ENCODE measurements at regions of chr16 and their contacts with region 1.

Region 1: DNA sequence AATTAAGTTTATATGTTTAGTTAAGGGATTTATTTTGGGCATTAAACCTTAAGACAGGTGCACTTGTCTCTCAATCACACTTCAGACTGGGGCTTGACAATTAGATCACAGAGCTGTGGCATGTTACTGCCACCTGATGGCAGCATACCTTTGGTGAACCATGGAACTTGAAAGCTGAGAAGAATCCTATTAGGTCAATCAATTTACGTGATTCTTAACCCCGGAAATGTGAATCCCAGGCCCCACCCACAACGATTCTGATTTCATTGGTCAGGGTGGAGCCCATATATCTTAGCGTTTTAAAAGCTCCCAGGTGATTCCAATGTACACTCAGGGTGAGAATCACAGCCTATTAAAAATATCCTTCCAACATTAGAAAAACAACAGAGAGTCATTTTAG is 91.0 kb downstream of the GSG1L start:
- DNase-seq: peak in 1 of 10 donors; percentile 32
- H3K4me3 ChIP-seq: no peak overlapping the region
- H3K27ac ChIP-seq: no peak overlapping the region
- H3K27me3 ChIP-seq: no peaks in the 10 kb centered on the region
- CTCF ChIP-seq: peak in 54 of 56 donors; percentile 17 to 64 (median 42)

Region 2: GRCh38 chr16:27892881-27893280 is 79.6 kb before region 1 on chr16:
- intact Hi-C with region 1: no loop called
- DNase-seq: no peak
- H3K4me3 ChIP-seq: no peak overlapping the region
- H3K27ac ChIP-seq: no peak overlapping the region
- H3K27me3 ChIP-seq: peaks cover 0 to 9% (median 0%) of the 10 kb centered on the region in 45 donors
- CTCF ChIP-seq: no peak

Region 3: DNA sequence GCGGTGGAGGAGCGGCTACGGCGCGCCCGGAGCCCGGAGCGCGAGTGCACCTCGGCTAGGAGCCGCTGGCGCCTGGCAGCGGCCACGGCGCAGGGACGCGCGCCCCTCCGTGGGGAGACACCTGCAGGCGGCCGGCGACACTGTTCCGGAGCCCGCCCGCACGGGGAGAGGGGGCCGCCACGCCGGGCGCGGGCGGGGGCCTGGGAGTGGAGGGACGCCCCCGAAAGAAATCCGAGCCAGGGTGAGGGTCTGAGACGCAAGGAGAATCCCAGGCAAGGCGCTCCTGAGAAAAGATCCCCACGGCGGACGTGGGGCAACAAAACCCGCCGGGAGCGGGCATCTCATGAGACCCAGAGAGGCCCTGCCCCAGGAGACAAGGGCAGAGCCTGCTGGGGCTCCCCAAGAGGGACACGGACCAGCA is 91.2 kb after region 1 on chr16 and contains the start of gene GSG1L:
- intact Hi-C with region 1: loop called in 1 of 2 experiments (anchors 10 kb)
- DNase-seq: peak in 1 of 10 donors; percentile 54
- H3K4me3 ChIP-seq: peak within 1 kb of the TSS; percentile 7 to 68 (median 51)
- H3K27ac ChIP-seq: peak within 1 kb of the TSS in 16 of 59 donors; percentile 9 to 71 (median 46)
- H3K27me3 ChIP-seq: peaks cover 0 to 41% (median 16%) of the 10 kb centered on the region in 45 donors
- CTCF ChIP-seq: peak in 26 of 56 donors; percentile 6 to 37 (median 26)
- total RNA-seq, gene GSG1L: 5.3 to 19.0 (median 11.5) TPM

Measured in dorsolateral prefrontal cortex (tissue), 120 donors.